Right ventricle myocardium inferior (tissue), 1 donor: ENCODE measurements at regions of chr10 and their contacts with region 1.

Region 1: DNA sequence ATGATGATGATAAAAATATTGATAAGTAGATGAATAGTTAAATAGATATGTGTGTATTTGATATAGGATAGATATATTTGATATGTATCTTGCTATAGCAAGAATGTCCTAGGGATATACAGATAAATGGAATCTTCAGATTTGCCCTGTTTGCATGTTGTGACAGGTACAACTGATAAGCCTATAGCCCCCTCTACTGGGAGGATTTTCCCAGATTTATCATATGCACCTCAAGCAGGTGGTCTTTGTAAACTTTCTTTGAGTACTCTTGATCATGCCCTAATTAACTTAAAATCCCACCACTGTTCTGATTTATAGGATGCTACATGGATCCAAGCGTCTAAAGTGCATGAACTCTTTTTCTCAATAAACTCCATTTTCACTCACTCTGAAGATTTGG is 1050.7 kb downstream of the SORCS3 start:
- DNase-seq: no peak
- ATAC-seq: no peak

Region 2: DNA sequence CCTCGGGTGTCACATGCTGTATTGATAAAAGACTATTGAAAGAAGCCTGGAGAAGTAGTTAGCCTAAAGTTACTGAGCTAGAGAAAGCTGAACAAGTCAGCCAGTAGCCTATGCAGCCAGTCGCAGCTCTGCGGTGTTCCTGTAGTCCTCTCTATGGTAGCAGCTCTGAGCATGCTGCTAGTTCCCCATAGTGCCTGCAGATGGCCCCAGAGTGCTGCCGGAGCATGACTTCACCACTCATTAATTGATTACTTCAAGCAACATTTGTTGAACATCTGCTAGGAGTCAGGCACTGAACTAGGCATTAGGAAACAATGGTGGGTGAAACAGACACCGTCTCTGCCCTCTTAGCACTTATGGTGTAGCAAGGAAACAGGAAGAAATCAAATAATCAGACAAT is 628.0 kb before region 1 on chr10:
- intact Hi-C with region 1: loop called (anchors 2 kb)
- DNase-seq: no peak
- ATAC-seq: peak; percentile 74

Region 3: GRCh38 chr10:105262666-105263065 is 429.1 kb before region 1 on chr10:
- intact Hi-C with region 1: loop called (anchors 10 kb)
- DNase-seq: no peak
- ATAC-seq: no peak

Region 4: DNA sequence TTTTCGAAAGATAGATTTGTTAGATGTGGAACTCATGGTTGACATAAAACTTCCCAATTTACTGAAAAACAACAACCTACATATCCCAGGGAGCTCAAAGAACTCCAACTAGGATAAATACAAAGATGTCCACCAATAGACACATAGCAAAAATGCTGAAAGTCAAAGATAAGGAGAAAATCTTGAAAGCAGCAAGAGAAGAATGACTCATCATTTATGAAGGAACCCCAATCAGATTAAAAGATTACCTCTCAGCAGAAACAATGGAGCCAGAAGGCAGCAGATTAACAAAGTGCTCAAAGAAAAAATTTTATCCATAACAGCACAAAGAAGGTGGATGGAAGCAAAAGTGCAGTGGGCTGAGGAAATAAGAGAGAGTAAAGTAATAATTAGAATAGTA is 142.1 kb before region 1 on chr10:
- intact Hi-C with region 1: no loop called
- DNase-seq: no peak
- ATAC-seq: no peak